CD8-positive, alpha-beta memory T cell (primary cell): ENCODE measurements at regions of chr11 and their contacts with region 1.

Region 1: DNA sequence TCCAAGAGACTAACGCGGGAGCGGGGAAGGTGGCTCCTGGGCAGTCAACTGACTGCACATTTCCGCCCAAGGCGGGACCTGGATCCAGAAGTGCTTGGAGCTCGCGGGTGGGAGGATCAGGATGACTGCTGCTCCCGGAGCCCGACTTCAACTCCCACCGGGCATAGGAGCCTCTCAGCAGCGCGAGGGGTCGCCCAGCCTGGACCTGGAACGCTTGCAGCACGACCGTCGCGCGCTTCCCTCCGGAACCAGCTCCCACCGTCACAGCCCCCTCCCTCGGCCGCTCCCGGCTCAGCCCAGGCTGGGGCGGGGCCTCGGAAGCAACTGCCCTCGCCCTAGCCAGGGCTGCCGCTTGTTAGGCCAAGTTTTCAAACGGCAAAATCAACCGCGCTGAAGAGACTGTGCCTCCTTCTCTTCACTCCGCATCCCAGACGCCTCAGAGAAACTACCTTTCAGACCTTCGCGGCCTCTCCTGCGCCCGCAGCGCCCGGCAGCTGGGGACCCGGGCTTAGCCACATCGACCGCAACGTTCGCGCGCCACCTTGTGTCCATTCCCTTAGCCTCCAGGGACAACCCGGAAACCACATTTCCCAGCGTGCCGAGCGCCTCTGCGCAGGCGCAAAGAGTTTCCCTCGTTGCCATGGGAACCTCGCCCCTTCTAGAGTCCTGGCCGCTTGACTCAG is 14.0 kb downstream of the SSH3 start:
- DNase-seq: peak; percentile 95 to 99 (median 97)
- H3K4me3 ChIP-seq: peak overlapping the region; percentile 93
- H3K4me3 Mint-ChIP-seq: peak overlapping the region; percentile 94 to 100 (median 96)
- H3K27ac ChIP-seq: peak overlapping the region; percentile 82
- H3K27ac Mint-ChIP-seq: peak overlapping the region; percentile 84 to 98 (median 96)
- H3K4me1 ChIP-seq: peaks cover 20% of the 10 kb centered on the region
- H3K4me1 Mint-ChIP-seq: peaks cover 29 to 48% (median 42%) of the 10 kb centered on the region in 3 donors
- H3K27me3 ChIP-seq: no peaks in the 10 kb centered on the region
- H3K27me3 Mint-ChIP-seq: peaks cover 0 to 6% of the 10 kb centered on the region in 2 donors

Region 2: GRCh38 chr11:67277231-67277961 is 40.0 kb before region 1 on chr11:
- CTCF ChIA-PET with region 1: interaction called, 92 read pairs
- POLR2A ChIA-PET with region 1: interaction called, 10 read pairs
- DNase-seq: peak; percentile 87 to 95 (median 94)
- H3K4me3 ChIP-seq: peak overlapping the region; percentile 62
- H3K4me3 Mint-ChIP-seq: peak overlapping the region; percentile 75 to 89 (median 81)
- H3K27ac ChIP-seq: peak overlapping the region; percentile 89
- H3K27ac Mint-ChIP-seq: peak overlapping the region; percentile 86 to 99 (median 98)
- H3K4me1 ChIP-seq: peaks cover 88% of the 10 kb centered on the region
- H3K4me1 Mint-ChIP-seq: peaks cover 61 to 79% (median 68%) of the 10 kb centered on the region in 3 donors
- H3K27me3 ChIP-seq: no peaks in the 10 kb centered on the region
- H3K27me3 Mint-ChIP-seq: no peaks in the 10 kb centered on the region

Region 3: GRCh38 chr11:67303132-67303834 is 14.1 kb before region 1 on chr11 and contains the start of gene SSH3:
- CTCF ChIA-PET with region 1: interaction called, 15 read pairs
- POLR2A ChIA-PET with region 1: interaction called, 11 read pairs
- DNase-seq: peak in 4 of 5 donors; percentile 24 to 67 (median 43)
- H3K4me3 ChIP-seq: peak within 1 kb of the TSS; percentile 45
- H3K4me3 Mint-ChIP-seq: peak within 1 kb of the TSS; percentile 61 to 86 (median 68)
- H3K27ac ChIP-seq: no peak within 1 kb of the TSS
- H3K27ac Mint-ChIP-seq: peak within 1 kb of the TSS in 7 of 8 donors; percentile 42 to 86 (median 74)
- H3K4me1 ChIP-seq: peaks cover 14% of the 10 kb centered on the region
- H3K4me1 Mint-ChIP-seq: peaks cover 10 to 30% (median 11%) of the 10 kb centered on the region in 3 donors
- H3K27me3 ChIP-seq: no peaks in the 10 kb centered on the region
- H3K27me3 Mint-ChIP-seq: no peaks in the 10 kb centered on the region
- total RNA-seq, gene SSH3: 8.4 to 10.6 TPM

Region 4: DNA sequence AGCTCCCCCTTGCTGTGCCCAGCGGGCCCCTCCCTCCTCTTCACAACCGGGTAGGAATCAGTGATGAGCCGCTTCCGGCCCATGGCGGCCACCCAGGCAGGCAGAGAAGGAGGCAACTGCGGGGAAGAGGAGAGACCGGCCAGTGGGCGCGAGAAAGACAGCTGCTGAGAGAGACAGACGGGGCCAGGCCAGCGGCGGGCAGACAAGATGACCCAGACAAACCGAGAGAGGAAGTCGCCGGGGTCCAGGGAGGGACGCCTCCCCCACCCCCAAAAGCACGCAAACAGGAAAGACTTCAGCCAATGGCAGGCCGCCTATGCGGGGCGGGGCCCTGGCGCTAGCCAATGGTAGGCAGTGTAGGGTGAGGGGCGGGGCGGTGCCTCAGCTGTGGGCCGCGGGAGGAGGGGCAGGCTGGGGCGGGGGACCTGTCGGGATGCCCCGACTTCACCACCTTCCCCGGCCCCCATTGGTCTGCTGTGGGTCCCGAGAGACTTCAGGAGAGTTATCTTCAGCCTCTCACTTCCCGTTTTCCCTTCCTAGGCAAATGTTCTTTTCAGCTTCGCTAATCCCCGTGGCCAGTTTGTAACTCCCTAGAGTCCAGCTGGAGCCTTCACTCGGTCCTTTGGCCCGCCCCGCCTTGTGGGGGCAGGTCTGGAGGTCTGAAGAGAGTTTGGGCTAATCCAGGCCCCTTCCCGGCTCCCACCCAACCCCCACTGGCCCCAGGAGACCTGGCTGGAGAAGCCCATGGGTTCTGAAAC is 36.1 kb after region 1 on chr11 and contains the start of gene POLD4:
- CTCF ChIA-PET with region 1: interaction called, 12 read pairs
- POLR2A ChIA-PET with region 1: interaction called, 6 read pairs
- DNase-seq: peak; percentile 92 to 97 (median 96)
- H3K4me3 ChIP-seq: peak within 1 kb of the TSS; percentile 96
- H3K4me3 Mint-ChIP-seq: peak within 1 kb of the TSS; percentile 92 to 98 (median 95)
- H3K27ac ChIP-seq: peak within 1 kb of the TSS; percentile 96
- H3K27ac Mint-ChIP-seq: peak within 1 kb of the TSS; percentile 97 to 99 (median 98)
- H3K4me1 ChIP-seq: peaks cover 50% of the 10 kb centered on the region
- H3K4me1 Mint-ChIP-seq: peaks cover 35 to 69% (median 55%) of the 10 kb centered on the region in 3 donors
- H3K27me3 ChIP-seq: no peaks in the 10 kb centered on the region
- H3K27me3 Mint-ChIP-seq: no peaks in the 10 kb centered on the region
- total RNA-seq, gene POLD4: 32.3 to 37.8 TPM